Activated naive CD4-positive, alpha-beta T cell treated with anti-CD3 and anti-CD28 coated beads for 36 hours (primary cell): ENCODE measurements at regions of chr6 and their contacts with region 1.

Region 1: GRCh38 chr6:63598049-63599036 is 26.1 kb downstream of the LOC128125822 start:
- DNase-seq: peak; percentile 85
- H3K4me3 Mint-ChIP-seq: peak overlapping the region; percentile 84
- H3K27ac Mint-ChIP-seq: no peak overlapping the region
- H3K4me1 Mint-ChIP-seq: peaks cover 10% of the 10 kb centered on the region
- H3K27me3 Mint-ChIP-seq: peaks cover 6% of the 10 kb centered on the region

Region 2: DNA sequence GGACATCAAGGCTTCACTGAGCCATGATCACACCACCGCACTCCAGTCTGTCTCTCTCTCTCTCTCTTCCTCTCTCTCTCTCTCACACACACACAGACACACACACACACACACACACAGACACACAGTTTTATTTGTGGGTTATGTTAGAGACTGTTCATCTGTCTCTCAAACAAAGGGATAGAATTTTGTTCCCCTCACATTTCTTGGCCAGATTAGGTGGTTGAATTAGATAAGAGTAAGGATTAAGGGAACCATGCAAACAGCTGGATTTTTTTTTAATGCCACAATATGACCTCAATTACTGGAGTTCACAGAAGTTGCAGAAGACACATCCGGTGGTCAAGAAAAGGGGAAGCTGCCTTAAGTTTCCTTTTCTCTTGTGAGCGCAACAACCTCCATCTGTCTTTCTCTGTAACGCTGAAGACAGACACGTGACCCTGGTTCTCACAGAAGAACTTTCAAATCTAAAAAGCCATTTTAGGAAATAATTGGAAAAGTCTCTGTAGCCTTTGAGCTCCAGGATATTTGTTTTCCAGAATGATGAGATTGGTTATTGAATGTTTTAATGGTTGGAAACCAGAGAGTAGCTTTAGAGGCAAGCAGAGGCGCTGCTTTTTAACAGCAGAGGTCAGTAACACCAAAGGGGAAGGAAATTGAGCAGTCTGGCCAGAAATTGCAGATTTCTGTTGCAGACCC is 245.6 kb before region 1 on chr6:
- CTCF ChIA-PET with region 1: no interaction called
- intact Hi-C with region 1: loop called (anchors 1 kb)
- DNase-seq: peak; percentile 11
- H3K4me3 Mint-ChIP-seq: no peak overlapping the region
- H3K27ac Mint-ChIP-seq: no peak overlapping the region
- H3K4me1 Mint-ChIP-seq: peaks cover 8% of the 10 kb centered on the region
- H3K27me3 Mint-ChIP-seq: peaks cover 22% of the 10 kb centered on the region

Region 3: DNA sequence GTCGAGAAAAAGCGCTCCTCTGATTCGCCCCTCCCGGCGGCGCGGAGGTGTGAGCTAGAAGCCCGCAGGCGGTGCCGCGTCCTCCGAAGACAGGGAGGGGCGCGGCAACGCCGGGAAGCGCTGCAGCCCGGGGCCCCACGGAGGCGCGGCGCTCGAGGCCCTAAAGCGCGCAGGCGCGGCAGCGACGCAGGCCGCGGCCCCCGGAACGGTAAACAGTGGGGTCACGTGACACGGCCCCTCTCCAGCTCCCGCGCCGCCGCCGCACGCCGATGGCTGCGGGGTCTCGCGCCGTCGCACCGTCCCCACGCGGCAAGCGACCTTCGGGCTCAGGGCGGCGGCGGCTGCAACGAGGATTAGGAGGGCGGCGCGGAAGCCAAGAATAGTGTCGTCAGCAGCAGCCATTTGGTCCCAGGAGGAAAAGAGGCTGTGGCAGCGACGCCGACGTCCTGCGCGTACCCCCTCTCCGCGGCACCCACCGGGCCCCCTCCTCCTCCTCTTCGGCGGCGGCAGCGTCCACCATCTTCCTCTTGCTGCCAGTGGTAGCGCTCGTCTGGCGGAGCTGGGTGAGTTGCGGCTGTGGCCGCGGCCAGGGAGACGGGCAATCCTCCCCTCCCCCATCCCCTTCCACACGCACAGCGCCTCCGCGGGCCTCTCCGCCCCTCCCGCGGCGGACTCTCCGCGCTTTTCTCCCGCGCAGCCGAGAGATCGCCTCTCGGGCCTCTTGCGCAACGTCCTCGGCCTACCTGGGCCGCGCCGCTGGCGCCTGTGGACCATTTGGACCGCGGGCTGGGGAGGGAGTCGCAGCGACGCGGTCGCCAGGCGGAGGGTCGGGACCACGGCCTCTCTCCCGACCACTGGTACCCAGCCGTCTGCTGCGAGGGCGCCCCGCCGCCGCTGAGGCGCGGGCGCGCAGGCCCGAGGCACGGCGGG is 37.5 kb after region 1 on chr6 and contains the start of gene PHF3:
- CTCF ChIA-PET with region 1: interaction called, 15 read pairs
- intact Hi-C with region 1: loop called (anchors 1 kb)
- DNase-seq: peak; percentile 90
- H3K4me3 Mint-ChIP-seq: peak within 1 kb of the TSS; percentile 95
- H3K27ac Mint-ChIP-seq: peak within 1 kb of the TSS; percentile 92
- H3K4me1 Mint-ChIP-seq: peaks cover 37% of the 10 kb centered on the region
- H3K27me3 Mint-ChIP-seq: no peaks in the 10 kb centered on the region
- total RNA-seq, gene PHF3: 45.8 to 47.6 TPM

Region 4: DNA sequence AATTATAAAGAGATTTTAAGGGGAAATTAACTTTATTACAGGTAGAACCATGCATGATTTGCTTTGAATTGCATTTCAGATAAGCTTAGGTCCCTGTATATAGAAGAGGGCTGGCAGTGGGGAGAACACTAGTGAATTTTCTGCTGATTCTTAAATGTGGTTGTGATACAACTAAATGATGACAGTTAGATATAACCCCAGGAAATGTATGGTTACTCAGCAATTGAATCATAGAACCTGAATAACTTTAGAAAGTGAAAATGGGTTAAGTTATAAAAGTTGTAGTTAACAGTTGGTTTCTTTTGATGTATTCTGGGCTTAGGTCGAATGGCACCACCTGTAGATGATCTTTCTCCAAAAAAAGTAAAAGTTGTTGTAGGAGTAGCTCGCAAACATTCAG is 107.4 kb after region 1 on chr6:
- CTCF ChIA-PET with region 1: interaction called, 4 read pairs
- intact Hi-C with region 1: loop called (anchors 1 kb)
- DNase-seq: no peak
- H3K4me3 Mint-ChIP-seq: no peak overlapping the region
- H3K27ac Mint-ChIP-seq: peak overlapping the region; percentile 2
- H3K4me1 Mint-ChIP-seq: peaks cover 14% of the 10 kb centered on the region
- H3K27me3 Mint-ChIP-seq: no peaks in the 10 kb centered on the region

Region 5: DNA sequence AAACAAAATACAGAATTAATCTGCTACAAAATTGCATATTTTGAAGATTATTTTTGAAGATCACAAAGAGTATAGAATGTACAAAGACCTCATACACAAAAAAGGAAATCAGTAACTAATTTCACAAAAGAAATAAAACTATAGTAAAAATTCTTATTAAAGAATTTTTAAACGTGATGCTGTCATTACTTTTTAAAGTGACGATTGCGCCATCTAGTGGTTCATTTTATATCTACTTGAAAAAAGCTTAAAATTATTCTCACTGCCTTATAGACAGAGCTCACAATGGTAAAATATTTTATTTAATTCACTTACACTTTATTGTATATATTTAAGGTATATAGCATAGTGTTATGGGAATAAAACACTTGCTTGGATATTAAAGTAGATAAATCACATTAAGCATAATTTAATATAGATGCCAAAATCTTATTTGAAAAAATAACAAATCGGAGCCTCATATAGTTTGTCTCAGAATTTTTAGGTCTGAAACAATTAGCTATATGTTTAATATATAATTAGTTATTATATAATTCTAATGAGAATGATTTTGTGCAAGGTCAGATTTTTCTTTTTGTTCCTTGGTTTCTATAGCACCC is 166.1 kb after region 1 on chr6:
- CTCF ChIA-PET with region 1: interaction called, 85 read pairs
- intact Hi-C with region 1: loop called (anchors 1 kb)
- DNase-seq: no peak
- H3K4me3 Mint-ChIP-seq: no peak overlapping the region
- H3K27ac Mint-ChIP-seq: no peak overlapping the region
- H3K4me1 Mint-ChIP-seq: no peaks in the 10 kb centered on the region
- H3K27me3 Mint-ChIP-seq: no peaks in the 10 kb centered on the region

Region 6: DNA sequence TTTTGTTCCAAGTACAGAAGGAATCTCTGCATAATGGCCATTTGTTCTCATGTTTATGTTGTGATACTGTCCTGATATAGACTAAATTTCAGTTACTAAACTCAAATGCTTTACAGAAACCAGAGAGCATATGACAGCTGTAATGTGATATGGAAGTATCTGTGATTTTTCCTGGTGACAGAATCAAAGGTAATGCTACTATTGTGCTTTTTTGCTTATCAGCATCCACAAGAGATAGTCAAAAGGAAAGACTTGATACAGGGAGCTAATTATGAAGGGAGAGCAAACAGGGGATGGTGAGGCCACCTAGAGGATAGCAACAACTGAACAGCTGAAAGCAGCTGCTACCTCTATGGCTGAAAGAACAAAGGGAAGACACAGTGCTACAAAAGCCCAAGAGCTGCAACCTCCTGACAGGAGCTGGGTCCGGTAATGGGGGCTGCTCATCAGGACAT is 218.7 kb after region 1 on chr6:
- CTCF ChIA-PET with region 1: no interaction called
- intact Hi-C with region 1: loop called (anchors 5 kb)
- DNase-seq: no peak
- H3K4me3 Mint-ChIP-seq: no peak overlapping the region
- H3K27ac Mint-ChIP-seq: no peak overlapping the region
- H3K4me1 Mint-ChIP-seq: no peaks in the 10 kb centered on the region
- H3K27me3 Mint-ChIP-seq: no peaks in the 10 kb centered on the region